AG04450 (cell line): ENCODE measurements at regions of chr6 and their contacts with region 1.

Region 1: DNA sequence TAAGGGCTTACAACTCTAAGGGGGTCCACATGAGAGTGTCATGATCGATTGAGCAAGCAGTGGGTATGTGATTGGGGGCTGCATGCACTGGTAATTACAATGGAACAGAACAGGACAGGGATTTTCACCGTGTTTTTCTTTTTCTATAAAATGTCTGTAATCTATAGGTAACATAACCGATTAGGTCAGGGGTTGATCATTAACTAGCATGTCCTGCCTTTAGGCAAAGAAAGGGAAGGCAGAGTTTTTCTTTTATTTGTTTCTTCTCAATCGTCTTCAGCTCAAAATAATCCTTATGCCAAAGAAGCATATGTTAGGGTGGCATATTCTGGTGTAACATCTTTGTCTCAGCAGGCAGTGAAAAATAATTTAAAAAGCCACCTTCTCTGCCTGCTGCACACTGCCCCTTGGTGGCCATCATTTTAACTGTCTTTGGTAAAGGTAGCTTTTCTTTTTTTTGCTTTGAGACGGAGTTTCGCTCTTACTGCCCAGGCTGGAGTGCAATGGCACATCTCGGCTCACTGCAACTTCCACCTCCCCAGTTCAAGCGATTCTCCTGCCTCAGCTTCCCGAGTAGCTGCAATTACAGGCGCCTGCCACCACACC is 9.7 kb upstream of the CEP43 start:
- DNase-seq: peak; percentile 11
- H3K4me3 ChIP-seq: no peak overlapping the region
- H3K27ac ChIP-seq: no peak overlapping the region
- H3K27me3 ChIP-seq: no peaks in the 10 kb centered on the region
- CTCF ChIP-seq: peak; percentile 59

Region 2: GRCh38 chr6:166786704-166787293 is 202.7 kb before region 1 on chr6:
- CTCF ChIA-PET with region 1: interaction called, 83 read pairs
- POLR2A ChIA-PET with region 1: no interaction called
- DNase-seq: peak; percentile 20
- H3K4me3 ChIP-seq: no peak overlapping the region
- H3K27ac ChIP-seq: no peak overlapping the region
- H3K27me3 ChIP-seq: no peaks in the 10 kb centered on the region
- CTCF ChIP-seq: peak; percentile 73

Region 3: DNA sequence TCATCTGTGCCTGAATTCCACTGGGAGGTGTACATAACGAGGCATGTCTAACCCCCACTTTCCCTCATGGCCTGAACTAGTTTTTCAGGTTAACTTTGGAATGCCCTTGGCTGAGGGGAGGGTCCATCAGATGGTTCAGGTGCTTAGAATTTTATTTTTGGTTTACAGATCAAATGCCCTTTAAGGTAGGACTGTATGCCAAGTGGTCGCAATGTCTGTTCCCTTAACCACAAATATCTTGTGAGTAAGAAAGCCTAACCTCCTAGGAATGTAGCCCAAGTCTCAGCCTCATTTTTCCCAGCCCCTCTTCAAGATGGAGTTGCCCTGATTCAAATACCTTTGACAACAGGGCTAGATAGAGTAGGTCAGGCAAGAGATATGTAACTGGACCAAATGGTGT is 111.6 kb before region 1 on chr6:
- CTCF ChIA-PET with region 1: no interaction called
- POLR2A ChIA-PET with region 1: no interaction called
- DNase-seq: no peak
- H3K4me3 ChIP-seq: no peak overlapping the region
- H3K27ac ChIP-seq: no peak overlapping the region
- H3K27me3 ChIP-seq: no peaks in the 10 kb centered on the region
- CTCF ChIP-seq: no peak

Region 4: GRCh38 chr6:166958926-166959861 is 30.3 kb before region 1 on chr6:
- CTCF ChIA-PET with region 1: interaction called, 17 read pairs
- POLR2A ChIA-PET with region 1: interaction called, 3 read pairs
- DNase-seq: no peak
- H3K4me3 ChIP-seq: no peak overlapping the region
- H3K27ac ChIP-seq: no peak overlapping the region
- H3K27me3 ChIP-seq: no peaks in the 10 kb centered on the region
- CTCF ChIP-seq: no peak

Region 5: GRCh38 chr6:166977621-166978525 is 11.7 kb before region 1 on chr6:
- CTCF ChIA-PET with region 1: interaction called, 72 read pairs
- POLR2A ChIA-PET with region 1: no interaction called
- DNase-seq: no peak
- H3K4me3 ChIP-seq: no peak overlapping the region
- H3K27ac ChIP-seq: no peak overlapping the region
- H3K27me3 ChIP-seq: no peaks in the 10 kb centered on the region
- CTCF ChIP-seq: no peak

Region 6: GRCh38 chr6:167073679-167074274 is 84.2 kb after region 1 on chr6:
- CTCF ChIA-PET with region 1: no interaction called
- POLR2A ChIA-PET with region 1: no interaction called
- DNase-seq: no peak
- H3K4me3 ChIP-seq: no peak overlapping the region
- H3K27ac ChIP-seq: no peak overlapping the region
- H3K27me3 ChIP-seq: no peaks in the 10 kb centered on the region
- CTCF ChIP-seq: no peak